ENCODE measurements at regions of chr6 and their contacts with region 1.

Region 1: GRCh38 chr6:30616811-30617564 is at the start of gene PPP1R10:
- DNase-seq: peak; percentile 99
- ATAC-seq: peak; percentile 77
- H3K4me3 Mint-ChIP-seq: peak within 1 kb of the TSS; percentile 97
- H3K27ac Mint-ChIP-seq: peak within 1 kb of the TSS; percentile 98
- H3K4me1 Mint-ChIP-seq: peaks cover 40% of the 10 kb centered on the region
- H3K27me3 Mint-ChIP-seq: no peaks in the 10 kb centered on the region
- total RNA-seq, gene PPP1R10: 75.6 to 100.0 TPM

Region 2: DNA sequence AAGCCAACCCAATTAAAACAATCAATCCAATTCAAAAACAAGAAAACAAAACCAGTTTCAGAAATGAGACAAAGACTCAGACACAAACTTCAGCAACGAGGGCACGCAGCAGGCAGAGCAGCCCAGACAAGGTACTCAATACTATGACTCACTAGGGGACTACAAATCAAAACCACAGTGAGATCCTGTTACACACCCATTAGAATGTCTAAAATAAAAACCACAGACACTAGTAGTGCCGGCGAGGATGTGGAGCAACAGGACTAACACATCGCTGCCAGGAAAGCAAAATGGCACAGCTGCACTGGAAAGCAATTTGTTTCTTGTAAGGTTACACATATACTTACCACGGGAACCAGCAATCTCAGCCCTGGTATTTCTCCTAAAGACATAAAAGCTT is 1100.9 kb before region 1 on chr6:
- CTCF ChIA-PET with region 1: no interaction called
- POLR2A ChIA-PET with region 1: no interaction called
- intact Hi-C with region 1: no loop called
- DNase-seq: peak; percentile 61
- ATAC-seq: peak; percentile 99
- H3K4me3 Mint-ChIP-seq: no peak overlapping the region
- H3K27ac Mint-ChIP-seq: no peak overlapping the region
- H3K4me1 Mint-ChIP-seq: peaks cover 7% of the 10 kb centered on the region
- H3K27me3 Mint-ChIP-seq: peaks cover 18% of the 10 kb centered on the region

Region 3: GRCh38 chr6:30212865-30213666 is 403.9 kb before region 1 on chr6 and contains the start of gene TRIM26:
- CTCF ChIA-PET with region 1: no interaction called
- POLR2A ChIA-PET with region 1: no interaction called
- intact Hi-C with region 1: loop called in 1 of 2 experiments (anchors 2 kb)
- DNase-seq: peak; percentile 98
- ATAC-seq: peak; percentile 90
- H3K4me3 Mint-ChIP-seq: peak within 1 kb of the TSS; percentile 89
- H3K27ac Mint-ChIP-seq: peak within 1 kb of the TSS; percentile 99
- H3K4me1 Mint-ChIP-seq: peaks cover 50% of the 10 kb centered on the region
- H3K27me3 Mint-ChIP-seq: no peaks in the 10 kb centered on the region
- total RNA-seq, gene TRIM26: 48.4 to 60.4 TPM

Region 4: DNA sequence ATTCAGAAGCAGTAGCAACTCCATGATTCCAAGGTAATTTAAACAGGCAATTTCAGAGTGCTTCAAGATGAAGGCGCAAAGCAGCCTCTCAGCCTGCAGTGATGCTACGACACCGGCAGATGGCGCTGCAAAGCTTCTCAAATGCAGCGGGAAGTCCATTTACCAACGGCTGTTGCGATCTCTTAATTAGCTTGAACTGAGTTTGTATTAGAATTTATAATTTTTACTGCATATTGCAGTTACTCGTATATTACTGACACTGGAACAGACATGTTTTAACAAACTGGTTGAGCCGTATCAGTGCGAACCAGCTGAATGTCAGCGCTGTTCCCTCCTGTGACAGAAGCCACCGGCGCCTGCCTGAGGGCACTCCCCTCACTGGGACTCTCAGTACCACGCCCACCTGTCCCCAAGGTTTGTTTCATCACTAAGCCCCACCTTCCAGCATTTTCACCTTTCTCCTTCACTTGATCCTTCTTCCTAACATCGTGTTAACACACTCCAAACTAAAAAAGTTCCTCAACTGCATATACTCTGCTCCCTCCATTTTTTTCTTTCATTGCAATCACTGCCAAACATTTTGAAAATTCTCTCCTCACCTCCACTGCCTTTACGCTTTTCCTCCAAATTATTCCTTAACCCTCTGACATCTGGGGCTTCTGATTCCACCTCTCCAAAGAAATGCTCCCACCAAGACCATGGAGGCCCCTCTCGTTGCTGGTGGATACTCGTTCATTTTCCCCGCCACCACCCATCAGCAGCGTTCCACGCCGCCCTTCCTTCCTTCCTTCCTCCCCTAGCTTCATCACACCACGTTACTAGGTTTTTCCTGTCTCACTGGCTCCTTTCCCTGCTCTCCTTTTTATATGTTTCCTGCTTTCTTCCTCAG is 75.2 kb before region 1 on chr6:
- CTCF ChIA-PET with region 1: interaction called, 11 read pairs
- POLR2A ChIA-PET with region 1: interaction called, 4 read pairs
- intact Hi-C with region 1: no loop called
- DNase-seq: peak; percentile 90
- ATAC-seq: peak; percentile 76
- H3K4me3 Mint-ChIP-seq: peak overlapping the region; percentile 59
- H3K27ac Mint-ChIP-seq: peak overlapping the region; percentile 79
- H3K4me1 Mint-ChIP-seq: peaks cover 40% of the 10 kb centered on the region
- H3K27me3 Mint-ChIP-seq: no peaks in the 10 kb centered on the region

Region 5: DNA sequence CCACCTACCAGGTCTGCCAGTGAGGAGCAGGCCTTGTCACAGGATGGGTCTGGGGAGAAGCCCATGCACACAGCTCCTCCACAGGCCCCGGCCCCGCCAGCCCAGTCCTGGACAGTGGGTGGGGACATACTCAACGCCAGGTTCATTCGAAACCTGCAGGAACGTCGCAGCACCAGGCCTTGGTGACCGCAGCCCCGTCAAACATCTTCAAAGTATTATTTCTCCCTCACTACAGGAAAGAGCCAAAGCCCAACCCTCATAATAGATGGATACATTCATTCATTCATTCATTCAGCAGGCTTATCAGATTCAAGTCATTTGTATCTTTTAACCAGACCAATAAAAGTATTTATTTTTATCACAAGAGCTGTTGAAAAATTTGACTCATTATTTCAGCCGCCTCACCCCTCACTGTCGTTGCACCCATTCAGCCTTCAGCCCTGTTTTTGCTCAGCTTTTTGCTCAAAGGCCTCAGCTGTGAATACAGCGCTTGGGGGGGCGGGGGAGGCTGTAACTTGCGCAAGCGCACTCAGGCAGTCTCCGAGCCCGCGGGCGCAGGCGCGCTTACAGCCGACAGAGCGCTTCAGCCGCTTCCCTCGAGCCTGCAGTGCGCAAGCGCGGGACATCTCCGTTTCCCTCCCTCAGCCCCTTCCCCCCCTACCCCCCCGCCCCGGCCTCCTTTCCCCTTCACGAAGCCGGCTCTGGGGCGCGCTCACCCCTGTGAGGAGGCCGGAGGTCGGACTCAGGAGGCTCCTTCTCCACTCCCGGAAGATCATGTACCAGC is 29.7 kb after region 1 on chr6 and contains the start of gene C6orf136:
- CTCF ChIA-PET with region 1: interaction called, 4 read pairs
- POLR2A ChIA-PET with region 1: interaction called, 17 read pairs
- intact Hi-C with region 1: loop called (anchors 1 kb)
- DNase-seq: peak; percentile 97
- ATAC-seq: peak; percentile 86
- H3K4me3 Mint-ChIP-seq: peak within 1 kb of the TSS; percentile 78
- H3K27ac Mint-ChIP-seq: peak within 1 kb of the TSS; percentile 88
- H3K4me1 Mint-ChIP-seq: peaks cover 20% of the 10 kb centered on the region
- H3K27me3 Mint-ChIP-seq: no peaks in the 10 kb centered on the region
- total RNA-seq, gene C6orf136: 26.5 to 30.8 TPM

Region 6: GRCh38 chr6:30730601-30731435 is 113.8 kb after region 1 on chr6:
- CTCF ChIA-PET with region 1: interaction called, 9 read pairs
- POLR2A ChIA-PET with region 1: interaction called, 28 read pairs
- intact Hi-C with region 1: no loop called
- DNase-seq: peak; percentile 94
- ATAC-seq: peak; percentile 75
- H3K4me3 Mint-ChIP-seq: peak overlapping the region; percentile 51
- H3K27ac Mint-ChIP-seq: peak overlapping the region; percentile 65
- H3K4me1 Mint-ChIP-seq: peaks cover 44% of the 10 kb centered on the region
- H3K27me3 Mint-ChIP-seq: no peaks in the 10 kb centered on the region

Region 7: GRCh38 chr6:31210123-31210522 is 593.1 kb after region 1 on chr6:
- CTCF ChIA-PET with region 1: no interaction called
- POLR2A ChIA-PET with region 1: no interaction called
- intact Hi-C with region 1: no loop called
- DNase-seq: no peak
- ATAC-seq: no peak
- H3K4me3 Mint-ChIP-seq: no peak overlapping the region
- H3K27ac Mint-ChIP-seq: no peak overlapping the region
- H3K4me1 Mint-ChIP-seq: peaks cover 5% of the 10 kb centered on the region
- H3K27me3 Mint-ChIP-seq: no peaks in the 10 kb centered on the region

Region 8: GRCh38 chr6:31271641-31272357 is 654.8 kb after region 1 on chr6 and contains the start of gene HLA-C:
- CTCF ChIA-PET with region 1: no interaction called
- POLR2A ChIA-PET with region 1: no interaction called
- intact Hi-C with region 1: loop called in 1 of 2 experiments (anchors 5 kb)
- DNase-seq: peak; percentile 92
- ATAC-seq: peak; percentile 89
- H3K4me3 Mint-ChIP-seq: peak within 1 kb of the TSS; percentile 95
- H3K27ac Mint-ChIP-seq: peak within 1 kb of the TSS; percentile 99
- H3K4me1 Mint-ChIP-seq: peaks cover 55% of the 10 kb centered on the region
- H3K27me3 Mint-ChIP-seq: no peaks in the 10 kb centered on the region
- total RNA-seq, gene HLA-C: 660 to 678 TPM

Measured in activated CD4-positive, alpha-beta T cell treated with anti-CD3 and anti-CD28 coated beads for 36 hours (primary cell).